BJ (cell line): ENCODE measurements at regions of chr1 and their contacts with region 1.

Region 1: GRCh38 chr1:150808121-150808520 is at the start of gene CTSK:
- DNase-seq: no peak
- H3K4me3 ChIP-seq: peak within 1 kb of the TSS; percentile 30
- H3K27me3 ChIP-seq: no peaks in the 10 kb centered on the region
- CTCF ChIP-seq: no peak
- polyA plus RNA-seq, gene CTSK: 70.7 and 91.1 TPM in 2 replicates

Region 2: GRCh38 chr1:149942207-149942606 is 865.9 kb before region 1 on chr1:
- CTCF ChIA-PET with region 1: no interaction called
- POLR2A ChIA-PET with region 1: no interaction called
- DNase-seq: no peak
- H3K4me3 ChIP-seq: no peak overlapping the region
- H3K27me3 ChIP-seq: no peaks in the 10 kb centered on the region
- CTCF ChIP-seq: peak; percentile 26; the same call in 1 of the 2 replicates

Region 3: DNA sequence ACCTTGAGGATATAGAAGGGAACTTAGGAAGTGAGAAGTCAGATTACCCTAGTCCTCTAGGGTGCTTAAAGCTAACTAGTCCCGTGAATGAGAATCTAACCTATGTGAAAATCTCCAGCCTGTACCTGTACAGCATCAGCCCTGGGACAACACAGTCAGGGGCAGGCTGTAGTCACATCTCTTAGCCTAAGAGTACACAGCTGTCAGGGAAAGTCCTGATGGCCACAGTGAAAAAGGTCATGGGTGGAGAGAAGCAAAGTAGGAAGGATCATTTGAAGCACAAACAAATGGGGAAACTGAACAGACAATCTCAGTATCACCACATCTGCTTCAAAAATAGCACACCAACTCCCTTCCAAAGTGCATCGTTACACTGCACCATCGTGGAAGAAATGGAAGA is 11.7 kb before region 1 on chr1:
- CTCF ChIA-PET with region 1: interaction called, 11 read pairs
- POLR2A ChIA-PET with region 1: no interaction called
- DNase-seq: no peak
- H3K4me3 ChIP-seq: no peak overlapping the region
- H3K27me3 ChIP-seq: no peaks in the 10 kb centered on the region
- CTCF ChIP-seq: no peak

Region 4: GRCh38 chr1:150820710-150821512 is 12.8 kb after region 1 on chr1:
- CTCF ChIA-PET with region 1: interaction called, 19 read pairs
- POLR2A ChIA-PET with region 1: interaction called, 18 read pairs
- DNase-seq: no peak
- H3K4me3 ChIP-seq: no peak overlapping the region
- H3K27me3 ChIP-seq: no peaks in the 10 kb centered on the region
- CTCF ChIP-seq: no peak